Panc1 (cell line): ENCODE measurements at regions of chr1 and their contacts with region 1.

Region 1: GRCh38 chr1:201418461-201418860 is 3.1 kb downstream of the TNNI1 start:
- DNase-seq: no peak
- ATAC-seq: no peak
- H3K4me3 ChIP-seq: no peak overlapping the region
- H3K27ac ChIP-seq: no peak overlapping the region
- H3K4me1 ChIP-seq: no peaks in the 10 kb centered on the region
- H3K27me3 ChIP-seq: peaks cover 4% of the 10 kb centered on the region
- CTCF ChIP-seq: no peak

Region 2: DNA sequence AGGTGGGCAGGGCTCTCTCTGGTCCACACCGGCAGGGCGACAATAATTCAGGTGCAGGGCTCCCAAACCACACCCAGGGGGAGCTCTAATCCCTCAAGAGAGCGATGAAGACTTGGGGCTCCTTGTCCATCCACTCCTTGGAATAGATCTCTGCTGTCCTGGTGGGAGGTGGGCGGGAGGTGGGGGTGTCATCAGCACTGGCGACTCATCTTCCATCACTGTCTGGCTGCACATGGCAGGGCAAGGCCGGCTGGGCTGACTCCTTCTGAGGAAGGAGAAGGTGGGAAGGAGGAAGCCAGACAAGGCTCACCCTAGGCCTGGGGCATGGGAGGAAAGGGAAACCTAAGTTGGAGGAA is 70.3 kb before region 1 on chr1:
- CTCF ChIA-PET with region 1: no interaction called
- POLR2A ChIA-PET with region 1: no interaction called
- in situ Hi-C with region 1: no loop called
- intact Hi-C with region 1: no loop called
- DNase-seq: no peak
- ATAC-seq: peak; percentile 88
- H3K4me3 ChIP-seq: no peak overlapping the region
- H3K27ac ChIP-seq: no peak overlapping the region
- H3K4me1 ChIP-seq: no peaks in the 10 kb centered on the region
- H3K27me3 ChIP-seq: peaks cover 2% of the 10 kb centered on the region
- CTCF ChIP-seq: peak; percentile 83

Region 3: GRCh38 chr1:201643835-201644104 is 225.3 kb after region 1 on chr1:
- CTCF ChIA-PET with region 1: no interaction called
- POLR2A ChIA-PET with region 1: interaction called, 11 read pairs
- in situ Hi-C with region 1: no loop called
- intact Hi-C with region 1: no loop called
- DNase-seq: no peak
- ATAC-seq: no peak
- H3K4me3 ChIP-seq: no peak overlapping the region
- H3K27ac ChIP-seq: no peak overlapping the region
- H3K4me1 ChIP-seq: no peaks in the 10 kb centered on the region
- H3K27me3 ChIP-seq: peaks cover 2% of the 10 kb centered on the region; the same call in 1 of the 2 replicates
- CTCF ChIP-seq: no peak